ENCODE measurements at regions of chr5 and their contacts with region 1.

Region 1: DNA sequence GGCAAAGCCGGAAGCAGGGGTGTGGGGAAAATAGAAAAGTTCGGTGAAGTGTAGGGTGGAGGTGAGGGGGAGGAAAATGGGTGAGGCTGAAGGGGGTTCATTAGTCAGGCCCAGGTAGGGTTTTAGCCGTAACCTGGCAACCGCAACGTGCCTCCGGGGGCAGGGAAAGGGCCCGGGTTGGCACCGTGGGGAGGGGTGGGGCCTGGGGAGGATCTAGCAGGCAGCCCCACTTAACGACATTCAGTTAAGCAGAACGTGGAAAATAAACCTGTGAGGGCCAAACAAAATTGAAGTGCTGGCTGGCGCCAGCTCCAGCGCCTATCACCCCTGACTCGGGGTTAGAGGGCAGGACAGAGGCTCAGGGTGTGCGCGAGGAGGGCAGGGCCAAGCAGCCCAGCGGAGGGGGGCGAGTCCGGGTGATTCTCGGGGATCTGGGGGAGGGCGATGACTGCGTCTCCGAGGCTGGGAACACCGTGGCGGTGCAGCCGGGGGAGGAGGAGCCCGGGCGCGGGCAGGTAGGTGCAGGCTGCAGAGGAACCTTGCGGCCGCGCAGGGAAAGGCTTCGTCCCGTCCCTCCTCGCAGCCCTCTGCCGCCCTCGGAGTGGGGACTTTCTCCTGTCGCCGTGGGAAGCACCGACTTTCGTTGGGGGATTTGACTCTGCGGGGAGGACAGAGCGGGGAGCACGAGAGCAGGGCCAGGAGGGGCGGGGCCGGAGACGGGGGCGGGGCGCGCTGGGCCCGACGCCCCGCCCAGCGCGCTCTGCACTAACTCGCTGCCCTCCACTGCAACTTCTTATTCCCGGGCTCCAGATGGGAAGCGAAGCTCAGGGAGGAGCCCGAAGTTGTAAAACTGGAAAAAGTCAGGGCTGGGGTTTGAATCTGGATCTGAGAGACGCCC is 5.1 kb downstream of the RGS14 start:
- DNase-seq: peak; percentile 70
- H3K4me3 Mint-ChIP-seq: peak overlapping the region; percentile 79
- H3K27ac Mint-ChIP-seq: no peak overlapping the region
- H3K4me1 Mint-ChIP-seq: peaks cover 21% of the 10 kb centered on the region
- H3K27me3 Mint-ChIP-seq: no peaks in the 10 kb centered on the region
- CTCF ChIP-seq: no peak

Region 2: GRCh38 chr5:177317959-177318377 is 44.9 kb before region 1 on chr5:
- CTCF ChIA-PET with region 1: no interaction called
- POLR2A ChIA-PET with region 1: no interaction called
- intact Hi-C with region 1: loop called (anchors 2 kb)
- DNase-seq: peak; percentile 85
- H3K4me3 Mint-ChIP-seq: no peak overlapping the region
- H3K27ac Mint-ChIP-seq: no peak overlapping the region
- H3K4me1 Mint-ChIP-seq: no peaks in the 10 kb centered on the region
- H3K27me3 Mint-ChIP-seq: no peaks in the 10 kb centered on the region
- CTCF ChIP-seq: peak; percentile 92

Measured in MCF 10A (cell line).